CD8-positive, alpha-beta T cell (primary cell): ENCODE measurements at regions of chr15 and their contacts with region 1.

Region 1: GRCh38 chr15:85785887-85786780 is 8.6 kb downstream of the KLHL25 start:
- DNase-seq: no peak
- ATAC-seq: no peak
- H3K4me3 ChIP-seq: peak overlapping the region in 1 of 2 experiments; percentile 9
- H3K4me3 Mint-ChIP-seq: peak overlapping the region; percentile 67
- H3K27ac ChIP-seq: peak overlapping the region in 1 of 2 experiments; percentile 24
- H3K27ac Mint-ChIP-seq: peak overlapping the region; percentile 73
- H3K4me1 ChIP-seq: peaks cover 23% of the 10 kb centered on the region
- H3K4me1 Mint-ChIP-seq: peaks cover 49% of the 10 kb centered on the region
- H3K27me3 ChIP-seq: no peaks in the 10 kb centered on the region
- H3K27me3 Mint-ChIP-seq: no peaks in the 10 kb centered on the region
- CTCF ChIP-seq: no peak

Region 2: GRCh38 chr15:85750319-85750806 is 35.8 kb before region 1 on chr15:
- CTCF ChIA-PET with region 1: no interaction called
- POLR2A ChIA-PET with region 1: no interaction called
- intact Hi-C with region 1: loop called (anchors 5 kb)
- DNase-seq: peak in 1 of 9 experiments; percentile 26
- ATAC-seq: no peak
- H3K4me3 ChIP-seq: no peak overlapping the region
- H3K4me3 Mint-ChIP-seq: no peak overlapping the region
- H3K27ac ChIP-seq: no peak overlapping the region
- H3K27ac Mint-ChIP-seq: peak overlapping the region; percentile 80
- H3K4me1 ChIP-seq: peaks cover 26% of the 10 kb centered on the region
- H3K4me1 Mint-ChIP-seq: peaks cover 37% of the 10 kb centered on the region
- H3K27me3 ChIP-seq: no peaks in the 10 kb centered on the region
- H3K27me3 Mint-ChIP-seq: no peaks in the 10 kb centered on the region
- CTCF ChIP-seq: no peak

Region 3: DNA sequence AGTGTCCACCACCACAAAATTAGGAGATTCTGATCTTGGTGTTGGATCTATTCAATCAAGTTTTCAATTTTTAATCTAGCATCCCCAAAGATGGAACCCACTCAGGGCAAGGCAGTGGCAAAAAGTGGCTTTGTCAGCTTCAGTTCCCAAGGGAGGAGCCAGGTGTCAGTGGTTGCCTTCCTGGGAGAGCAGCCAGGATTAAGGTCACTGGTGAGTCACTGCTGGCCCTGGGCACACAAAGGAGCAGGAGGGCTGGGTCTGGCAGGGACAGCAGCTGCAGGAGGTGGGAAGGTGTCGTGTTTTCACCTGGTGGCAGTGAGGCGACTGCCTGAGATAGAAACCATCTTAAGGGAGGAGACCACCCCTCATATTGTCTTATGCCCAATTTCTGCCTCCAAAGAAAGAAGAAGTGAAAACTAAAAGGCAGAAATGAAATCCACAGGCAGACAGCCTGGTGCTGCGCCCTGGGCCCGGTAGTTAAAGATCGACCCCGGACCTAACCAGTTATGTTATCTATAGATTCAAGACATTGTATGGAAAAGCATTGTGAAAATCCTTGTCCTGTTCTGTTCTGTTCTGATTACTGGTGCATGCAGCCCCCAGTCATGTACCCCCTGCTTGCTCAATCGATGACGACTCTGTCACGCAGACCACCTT is 14.5 kb after region 1 on chr15:
- CTCF ChIA-PET with region 1: interaction called, 3 read pairs
- POLR2A ChIA-PET with region 1: interaction called, 3 read pairs
- intact Hi-C with region 1: loop called in 1 of 2 experiments (anchors 2 kb)
- DNase-seq: no peak
- ATAC-seq: no peak
- H3K4me3 ChIP-seq: no peak overlapping the region
- H3K4me3 Mint-ChIP-seq: no peak overlapping the region
- H3K27ac ChIP-seq: no peak overlapping the region
- H3K27ac Mint-ChIP-seq: no peak overlapping the region
- H3K4me1 ChIP-seq: peaks cover 7% of the 10 kb centered on the region
- H3K4me1 Mint-ChIP-seq: peaks cover 5% of the 10 kb centered on the region
- H3K27me3 ChIP-seq: no peaks in the 10 kb centered on the region
- H3K27me3 Mint-ChIP-seq: peaks cover 6% of the 10 kb centered on the region
- CTCF ChIP-seq: no peak